Activated CD8-positive, alpha-beta T cell treated with anti-CD3 and anti-CD28 coated beads, Interleukin-2, amount 10 ng/mL, durations not matched to agents 7 days and 5 days (primary cell): ENCODE measurements at regions of chr7 and their contacts with region 1.

Region 1: DNA sequence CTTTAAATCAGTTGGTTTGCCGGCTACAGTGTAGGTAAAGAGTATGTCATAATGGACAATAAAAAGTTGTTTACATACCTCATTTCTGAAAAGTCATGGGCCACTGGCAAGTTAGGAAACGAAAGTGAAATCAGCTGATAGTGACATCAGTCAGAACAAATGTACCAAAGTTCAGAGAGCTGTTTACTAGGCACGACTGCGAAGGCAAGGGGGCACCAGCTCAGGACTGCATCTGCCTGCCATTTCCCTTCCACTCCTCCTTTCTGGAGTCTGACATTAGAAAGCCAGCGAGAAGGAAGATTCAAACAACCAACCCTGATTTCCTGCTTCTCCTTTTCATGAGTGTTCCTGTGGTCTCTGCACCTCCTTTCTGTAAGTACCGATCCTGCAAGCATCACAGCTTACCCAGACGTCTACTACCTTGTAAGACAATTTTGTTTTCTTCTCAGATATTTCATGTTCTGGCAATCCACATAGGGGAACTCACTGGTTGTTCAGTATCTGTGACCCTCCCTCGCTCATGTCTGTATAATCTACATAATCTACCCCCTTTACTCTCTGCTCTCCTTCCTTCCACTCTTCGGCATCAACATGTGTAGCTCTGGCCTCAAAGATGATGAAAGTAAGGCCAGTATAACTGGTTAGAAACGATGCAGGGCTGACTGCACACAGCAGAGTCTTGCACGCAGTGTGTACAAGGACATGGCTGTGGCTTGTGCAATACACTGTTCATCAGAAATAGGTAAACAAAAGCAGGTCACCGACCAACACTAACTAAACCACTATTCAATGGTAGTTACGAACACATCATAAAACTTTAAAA is at the start of gene TMEM140:
- DNase-seq: peak; percentile 77
- ATAC-seq: peak; percentile 84
- H3K4me3 Mint-ChIP-seq: peak within 1 kb of the TSS; percentile 84
- H3K27ac Mint-ChIP-seq: peak within 1 kb of the TSS; percentile 95
- H3K4me1 Mint-ChIP-seq: peaks cover 53% of the 10 kb centered on the region
- H3K27me3 Mint-ChIP-seq: no peaks in the 10 kb centered on the region
- total RNA-seq, gene TMEM140: 12.6 to 12.7 TPM

Region 2: GRCh38 chr7:134992626-134993179 is 155.4 kb before region 1 on chr7:
- CTCF ChIA-PET with region 1: interaction called, 40 read pairs
- POLR2A ChIA-PET with region 1: interaction called, 49 read pairs
- DNase-seq: peak; percentile 31
- ATAC-seq: peak; percentile 35
- H3K4me3 Mint-ChIP-seq: no peak overlapping the region
- H3K27ac Mint-ChIP-seq: peak overlapping the region; percentile 65
- H3K4me1 Mint-ChIP-seq: peaks cover 64% of the 10 kb centered on the region
- H3K27me3 Mint-ChIP-seq: no peaks in the 10 kb centered on the region

Region 3: GRCh38 chr7:135160098-135160857 is 12.2 kb after region 1 on chr7:
- CTCF ChIA-PET with region 1: interaction called, 98 read pairs
- POLR2A ChIA-PET with region 1: interaction called, 23 read pairs
- DNase-seq: no peak
- ATAC-seq: peak; percentile 18
- H3K4me3 Mint-ChIP-seq: no peak overlapping the region
- H3K27ac Mint-ChIP-seq: peak overlapping the region; percentile 53
- H3K4me1 Mint-ChIP-seq: peaks cover 29% of the 10 kb centered on the region
- H3K27me3 Mint-ChIP-seq: no peaks in the 10 kb centered on the region

Region 4: DNA sequence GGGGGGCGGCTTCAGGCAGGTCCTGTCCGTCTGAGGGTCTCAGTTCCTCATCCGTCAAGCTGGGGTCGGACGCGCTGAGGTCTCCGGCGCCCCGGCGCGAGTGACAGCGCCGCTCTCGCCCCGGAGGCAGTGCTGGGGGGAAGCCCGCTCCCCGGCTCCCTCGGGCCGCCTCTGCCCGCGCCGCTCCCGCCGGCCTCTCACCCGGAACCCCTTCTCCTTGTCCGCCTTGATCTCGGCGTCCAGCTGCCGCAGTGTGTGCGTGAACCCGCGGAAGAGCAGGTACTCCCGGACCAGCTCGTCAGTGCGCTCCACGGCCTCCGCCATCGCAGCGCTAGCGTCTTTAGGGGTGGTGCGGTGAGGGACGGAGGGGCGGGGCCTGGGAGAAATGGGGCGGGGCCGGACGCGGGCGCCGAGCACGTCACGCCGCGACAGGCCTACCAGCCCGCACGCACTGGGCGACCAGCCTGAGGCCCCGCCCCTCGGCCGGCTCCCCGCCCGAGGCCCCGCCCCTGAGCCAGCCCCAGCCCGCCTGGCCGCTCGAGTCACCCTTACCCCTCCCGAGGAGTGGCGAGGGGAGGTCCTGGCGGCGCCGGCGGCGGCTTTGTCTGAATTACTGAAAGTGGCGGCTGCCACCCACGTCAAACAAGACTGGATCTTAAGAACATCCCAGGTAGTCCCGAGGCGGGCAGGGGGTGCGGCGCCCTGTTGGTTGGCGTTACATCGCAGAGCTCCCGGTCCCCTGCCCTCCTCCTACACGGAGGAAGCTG is 63.3 kb after region 1 on chr7 and contains the start of gene WDR91:
- CTCF ChIA-PET with region 1: no interaction called
- POLR2A ChIA-PET with region 1: interaction called, 16 read pairs
- DNase-seq: peak; percentile 96
- ATAC-seq: peak; percentile 92
- H3K4me3 Mint-ChIP-seq: peak within 1 kb of the TSS; percentile 94
- H3K27ac Mint-ChIP-seq: peak within 1 kb of the TSS; percentile 99
- H3K4me1 Mint-ChIP-seq: peaks cover 18% of the 10 kb centered on the region
- H3K27me3 Mint-ChIP-seq: peaks cover 3% of the 10 kb centered on the region
- total RNA-seq, gene WDR91: 10.0 to 11.5 TPM